Dendritic cell treated with granulocyte-macrophage colony-stimulating factor and Interleukin-4, amounts not matched to agents 40 ng/mL and 50 ng/mL, for 4 days (primary cell): ENCODE measurements at regions of chr7 and their contacts with region 1.

Region 1: GRCh38 chr7:37833107-37833817 is 15.1 kb upstream of the NME8 start:
- H3K4me3 Mint-ChIP-seq: peak overlapping the region; percentile 79
- H3K27ac Mint-ChIP-seq: peak overlapping the region; percentile 61
- H3K4me1 Mint-ChIP-seq: peaks cover 21% of the 10 kb centered on the region
- H3K27me3 Mint-ChIP-seq: no peaks in the 10 kb centered on the region

Region 2: GRCh38 chr7:37234928-37235327 is 598.3 kb before region 1 on chr7:
- intact Hi-C with region 1: loop called (anchors 10 kb)
- H3K4me3 Mint-ChIP-seq: no peak overlapping the region
- H3K27ac Mint-ChIP-seq: no peak overlapping the region
- H3K4me1 Mint-ChIP-seq: peaks cover 15% of the 10 kb centered on the region
- H3K27me3 Mint-ChIP-seq: no peaks in the 10 kb centered on the region

Region 3: DNA sequence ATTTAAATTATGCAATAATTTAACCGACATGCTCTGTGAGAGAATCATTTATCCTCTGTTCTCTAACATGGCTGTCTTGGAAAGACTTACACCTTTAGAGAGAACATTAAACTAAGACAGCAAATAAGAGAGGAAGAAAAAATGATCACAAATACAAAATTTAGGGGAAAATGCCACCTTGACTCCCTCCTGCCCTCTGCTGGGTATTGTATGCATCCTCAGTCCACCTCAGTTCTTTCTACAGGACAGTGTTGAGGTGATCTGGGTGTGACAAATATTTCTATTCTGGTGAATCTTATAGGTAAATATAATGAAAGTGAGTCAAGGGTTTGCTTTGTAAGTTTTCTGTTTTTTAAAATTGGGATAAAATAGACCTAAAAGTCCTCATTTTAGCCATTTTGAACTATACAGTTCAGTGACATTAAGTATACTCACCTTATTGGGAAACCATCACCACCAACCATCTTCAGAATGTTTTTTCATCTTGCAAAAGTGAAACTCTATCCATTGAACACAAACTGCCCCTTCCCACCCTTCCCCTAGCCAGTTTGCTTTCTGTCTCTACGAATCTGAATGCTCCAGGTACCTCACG is 323.1 kb before region 1 on chr7:
- intact Hi-C with region 1: loop called (anchors 5 kb)
- H3K4me3 Mint-ChIP-seq: no peak overlapping the region
- H3K27ac Mint-ChIP-seq: no peak overlapping the region
- H3K4me1 Mint-ChIP-seq: no peaks in the 10 kb centered on the region
- H3K27me3 Mint-ChIP-seq: peaks cover 4% of the 10 kb centered on the region

Region 4: GRCh38 chr7:37732253-37732652 is 101.0 kb before region 1 on chr7:
- intact Hi-C with region 1: loop called (anchors 5 kb)
- H3K4me3 Mint-ChIP-seq: no peak overlapping the region
- H3K27ac Mint-ChIP-seq: peak overlapping the region; percentile 28
- H3K4me1 Mint-ChIP-seq: peaks cover 51% of the 10 kb centered on the region
- H3K27me3 Mint-ChIP-seq: no peaks in the 10 kb centered on the region